Activated CD8-positive, alpha-beta T cell treated with anti-CD3 and anti-CD28 coated beads, Interleukin-2, amount 10 ng/mL, durations not matched to agents 7 days and 5 days (primary cell): ENCODE measurements at regions of chr1 and their contacts with region 1.

Region 1: GRCh38 chr1:199243423-199244061 is 604.7 kb downstream of the PTPRC start:
- DNase-seq: peak; percentile 83
- ATAC-seq: peak; percentile 99
- H3K4me3 Mint-ChIP-seq: no peak overlapping the region
- H3K27ac Mint-ChIP-seq: peak overlapping the region; percentile 28
- H3K4me1 Mint-ChIP-seq: peaks cover 20% of the 10 kb centered on the region
- H3K27me3 Mint-ChIP-seq: peaks cover 6% of the 10 kb centered on the region

Region 2: GRCh38 chr1:198937231-198938031 is 306.1 kb before region 1 on chr1:
- CTCF ChIA-PET with region 1: interaction called, 11 read pairs
- POLR2A ChIA-PET with region 1: interaction called, 6 read pairs
- DNase-seq: peak; percentile 82
- ATAC-seq: peak; percentile 92
- H3K4me3 Mint-ChIP-seq: no peak overlapping the region
- H3K27ac Mint-ChIP-seq: peak overlapping the region; percentile 88
- H3K4me1 Mint-ChIP-seq: peaks cover 21% of the 10 kb centered on the region
- H3K27me3 Mint-ChIP-seq: no peaks in the 10 kb centered on the region

Region 3: DNA sequence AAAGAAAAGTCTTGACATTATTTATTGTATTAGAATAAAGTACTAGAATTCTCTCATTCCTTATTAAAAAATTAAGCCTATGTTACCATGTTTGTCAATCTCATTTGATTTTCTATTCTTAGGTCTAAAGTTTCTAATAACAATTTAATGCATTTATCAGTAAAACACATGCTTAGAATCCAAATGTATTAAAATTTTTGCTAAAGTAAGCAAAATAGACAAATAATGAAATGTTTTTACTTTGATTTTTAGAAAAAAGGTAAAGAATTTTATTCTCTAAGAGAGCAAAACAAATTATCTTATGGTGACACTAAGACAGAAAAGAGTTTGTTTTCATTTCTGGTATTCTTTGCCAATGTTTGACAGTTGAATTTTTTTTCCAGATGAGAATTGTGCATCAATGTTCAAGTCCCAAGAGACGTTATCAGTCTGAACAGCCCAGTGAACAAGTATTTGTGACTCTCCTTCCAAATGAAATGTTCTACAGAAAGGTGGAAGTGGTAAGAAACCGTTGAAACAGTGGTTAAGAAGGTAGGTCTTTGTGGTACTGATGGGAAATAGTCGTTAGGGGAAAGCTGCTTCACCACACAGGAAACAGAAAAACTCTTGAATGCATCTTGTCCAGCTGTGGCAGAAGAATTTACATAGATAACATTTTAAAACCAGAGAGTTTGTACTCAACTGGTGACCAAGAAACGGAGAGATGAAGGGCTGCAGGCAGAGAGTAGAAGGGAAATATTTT is 202.2 kb before region 1 on chr1:
- CTCF ChIA-PET with region 1: interaction called, 13 read pairs
- POLR2A ChIA-PET with region 1: interaction called, 3 read pairs
- DNase-seq: peak; percentile 76
- ATAC-seq: peak; percentile 88
- H3K4me3 Mint-ChIP-seq: peak overlapping the region; percentile 15
- H3K27ac Mint-ChIP-seq: peak overlapping the region; percentile 81
- H3K4me1 Mint-ChIP-seq: peaks cover 51% of the 10 kb centered on the region
- H3K27me3 Mint-ChIP-seq: no peaks in the 10 kb centered on the region

Region 4: DNA sequence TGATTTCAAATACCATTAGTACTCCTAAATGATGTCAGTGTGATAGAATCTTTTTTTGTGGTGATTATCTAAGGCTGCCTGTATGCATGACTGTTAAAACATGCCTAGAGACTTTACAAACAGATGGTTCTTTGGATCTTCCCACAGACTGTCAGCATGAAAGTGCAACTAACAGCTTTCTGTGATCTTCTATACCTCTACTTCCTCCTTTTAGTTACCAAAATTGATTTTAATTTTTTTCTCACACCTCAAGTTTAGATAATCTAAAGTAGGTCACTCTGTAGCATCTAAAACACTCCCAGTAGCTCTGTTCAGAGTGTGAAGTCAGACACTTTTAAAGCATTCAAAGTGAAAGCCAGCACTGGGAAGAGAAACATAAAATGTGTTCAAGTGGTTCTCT is 70.2 kb before region 1 on chr1:
- CTCF ChIA-PET with region 1: interaction called, 12 read pairs
- POLR2A ChIA-PET with region 1: no interaction called
- DNase-seq: peak; percentile 36
- ATAC-seq: peak; percentile 85
- H3K4me3 Mint-ChIP-seq: peak overlapping the region; percentile 1
- H3K27ac Mint-ChIP-seq: peak overlapping the region; percentile 57
- H3K4me1 Mint-ChIP-seq: peaks cover 48% of the 10 kb centered on the region
- H3K27me3 Mint-ChIP-seq: peaks cover 1% of the 10 kb centered on the region

Region 5: DNA sequence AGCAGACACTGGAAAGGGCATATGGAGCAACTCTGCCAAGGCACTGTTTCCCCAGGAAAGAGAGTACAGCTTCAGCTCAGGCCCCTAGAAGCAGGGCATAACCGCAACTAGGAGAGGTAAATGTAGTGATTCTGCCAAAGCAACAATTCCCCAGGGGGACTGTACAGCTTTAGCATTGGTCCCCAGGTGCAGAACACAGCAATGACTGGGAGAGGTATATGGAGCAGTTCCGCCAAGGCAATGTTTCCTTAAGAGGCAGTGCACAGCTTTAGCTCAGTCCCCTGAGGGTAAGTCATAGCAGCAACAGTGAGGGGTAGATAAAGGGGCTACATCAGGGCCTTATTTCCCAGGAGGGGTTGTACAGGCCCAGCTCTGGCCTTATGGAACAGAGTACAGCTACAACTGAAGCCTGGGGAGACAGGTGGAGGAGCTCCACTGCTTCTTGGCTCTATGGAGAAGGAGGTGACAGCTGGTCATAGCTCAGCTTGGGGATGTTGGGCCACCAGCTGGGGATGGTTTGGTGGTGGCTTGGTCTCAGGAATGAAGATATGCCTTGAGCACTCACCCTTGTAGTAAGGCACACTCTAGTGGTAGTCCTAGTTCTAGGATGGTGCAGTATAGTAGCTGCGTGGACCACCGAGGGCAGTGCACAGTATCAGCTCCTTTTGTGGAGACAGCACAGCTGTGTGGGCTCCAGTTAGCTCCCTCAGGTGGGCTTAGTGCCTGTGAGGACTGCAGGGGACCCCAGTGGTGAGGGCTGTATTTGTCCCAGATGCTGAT is 22.0 kb before region 1 on chr1:
- CTCF ChIA-PET with region 1: interaction called, 10 read pairs
- POLR2A ChIA-PET with region 1: no interaction called
- DNase-seq: no peak
- ATAC-seq: no peak
- H3K4me3 Mint-ChIP-seq: no peak overlapping the region
- H3K27ac Mint-ChIP-seq: no peak overlapping the region
- H3K4me1 Mint-ChIP-seq: peaks cover 12% of the 10 kb centered on the region
- H3K27me3 Mint-ChIP-seq: no peaks in the 10 kb centered on the region